Heart right ventricle (tissue), 16 donors: ENCODE measurements at regions of chr13 and their contacts with region 1.

Region 1: DNA sequence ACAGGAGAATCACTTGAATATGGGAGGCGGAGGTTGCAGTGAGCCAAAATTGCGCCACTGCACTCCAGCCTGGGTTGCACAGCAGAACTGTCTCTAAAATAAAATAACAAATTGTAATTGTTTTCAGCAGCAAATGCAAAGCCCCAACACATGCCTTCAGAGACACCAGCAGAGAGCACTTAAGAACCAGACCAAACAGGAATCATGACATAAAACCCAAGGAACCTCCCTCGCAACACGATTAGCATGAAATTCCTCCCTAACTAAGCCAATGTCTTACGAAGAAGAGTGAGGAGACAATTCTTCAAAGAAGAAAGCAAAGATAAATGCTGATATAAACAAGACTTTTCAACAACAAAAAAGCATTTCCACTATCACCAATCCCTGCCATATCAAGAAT is 40.1 kb downstream of the PSPC1 start:
- DNase-seq: no peak
- ATAC-seq: no peak
- H3K4me3 ChIP-seq: no peak overlapping the region
- H3K27ac ChIP-seq: no peak overlapping the region
- H3K4me1 ChIP-seq: no peaks in the 10 kb centered on the region
- H3K27me3 ChIP-seq: no peaks in the 10 kb centered on the region
- CTCF ChIP-seq: no peak

Region 2: DNA sequence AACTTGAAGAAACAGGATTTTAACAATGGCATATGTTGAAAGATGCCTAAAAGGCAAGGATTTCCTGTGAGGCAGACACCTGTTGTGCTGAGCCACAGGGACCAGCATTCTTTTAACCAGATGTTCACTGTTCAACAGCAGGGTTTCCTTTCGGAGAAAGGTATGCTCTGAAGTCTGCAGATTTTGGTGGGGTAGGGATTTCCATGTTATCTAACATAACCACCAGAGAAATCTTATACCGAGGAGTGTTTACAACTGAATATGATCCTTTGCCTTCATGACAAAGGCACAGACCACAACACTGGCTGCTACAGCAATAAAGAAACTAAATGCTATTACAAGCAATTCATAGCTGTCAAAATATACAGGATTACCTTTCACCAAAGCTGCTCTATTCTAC is 61.1 kb before region 1 on chr13:
- intact Hi-C with region 1: no loop called
- DNase-seq: no peak
- ATAC-seq: no peak
- H3K4me3 ChIP-seq: no peak overlapping the region
- H3K27ac ChIP-seq: no peak overlapping the region
- H3K4me1 ChIP-seq: no peaks in the 10 kb centered on the region
- H3K27me3 ChIP-seq: no peaks in the 10 kb centered on the region
- CTCF ChIP-seq: no peak

Region 3: GRCh38 chr13:19763618-19764017 is 21.0 kb after region 1 on chr13:
- intact Hi-C with region 1: loop called in 1 of 10 experiments (anchors 2 kb)
- DNase-seq: no peak
- ATAC-seq: no peak
- H3K4me3 ChIP-seq: no peak overlapping the region
- H3K27ac ChIP-seq: no peak overlapping the region
- H3K4me1 ChIP-seq: peaks cover 0 to 52% (median 13%) of the 10 kb centered on the region in 9 donors
- H3K27me3 ChIP-seq: no peaks in the 10 kb centered on the region
- CTCF ChIP-seq: no peak

Region 4: DNA sequence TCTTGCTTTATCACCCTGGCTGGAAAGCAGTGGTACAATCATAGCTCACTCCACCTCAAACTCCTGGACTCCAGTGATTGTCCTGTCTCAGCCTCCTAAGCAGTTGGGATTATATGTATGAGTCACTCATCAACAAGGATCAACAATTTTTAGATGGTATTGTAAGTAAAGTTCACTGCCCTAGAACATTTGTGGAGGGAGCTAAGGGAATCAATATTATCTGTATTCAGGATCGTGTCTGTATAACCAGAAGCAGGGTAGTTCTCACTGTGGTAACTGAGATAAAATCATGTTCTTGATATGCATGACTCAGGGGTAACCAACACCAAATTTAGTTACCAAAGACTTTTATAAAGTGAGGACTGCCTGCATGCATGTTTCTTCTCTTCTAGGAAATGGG is 93.8 kb after region 1 on chr13:
- intact Hi-C with region 1: no loop called
- DNase-seq: no peak
- ATAC-seq: no peak
- H3K4me3 ChIP-seq: no peak overlapping the region
- H3K27ac ChIP-seq: no peak overlapping the region
- H3K4me1 ChIP-seq: peaks cover 0 to 18% (median 11%) of the 10 kb centered on the region in 9 donors
- H3K27me3 ChIP-seq: no peaks in the 10 kb centered on the region
- CTCF ChIP-seq: no peak